Activated B cell treated with CpG ODN at 0.5 μM for 24 hours (primary cell): ENCODE measurements at regions of chr3 and their contacts with region 1.

Region 1: GRCh38 chr3:49539659-49540560 is 14.4 kb upstream of the BSN start:
- DNase-seq: peak; percentile 93
- ATAC-seq: peak; percentile 92
- H3K4me3 Mint-ChIP-seq: peak overlapping the region; percentile 79
- H3K27ac Mint-ChIP-seq: peak overlapping the region; percentile 46
- H3K4me1 Mint-ChIP-seq: peaks cover 9% of the 10 kb centered on the region
- H3K27me3 Mint-ChIP-seq: peaks cover 11% of the 10 kb centered on the region
- CTCF ChIP-seq: no peak

Region 2: DNA sequence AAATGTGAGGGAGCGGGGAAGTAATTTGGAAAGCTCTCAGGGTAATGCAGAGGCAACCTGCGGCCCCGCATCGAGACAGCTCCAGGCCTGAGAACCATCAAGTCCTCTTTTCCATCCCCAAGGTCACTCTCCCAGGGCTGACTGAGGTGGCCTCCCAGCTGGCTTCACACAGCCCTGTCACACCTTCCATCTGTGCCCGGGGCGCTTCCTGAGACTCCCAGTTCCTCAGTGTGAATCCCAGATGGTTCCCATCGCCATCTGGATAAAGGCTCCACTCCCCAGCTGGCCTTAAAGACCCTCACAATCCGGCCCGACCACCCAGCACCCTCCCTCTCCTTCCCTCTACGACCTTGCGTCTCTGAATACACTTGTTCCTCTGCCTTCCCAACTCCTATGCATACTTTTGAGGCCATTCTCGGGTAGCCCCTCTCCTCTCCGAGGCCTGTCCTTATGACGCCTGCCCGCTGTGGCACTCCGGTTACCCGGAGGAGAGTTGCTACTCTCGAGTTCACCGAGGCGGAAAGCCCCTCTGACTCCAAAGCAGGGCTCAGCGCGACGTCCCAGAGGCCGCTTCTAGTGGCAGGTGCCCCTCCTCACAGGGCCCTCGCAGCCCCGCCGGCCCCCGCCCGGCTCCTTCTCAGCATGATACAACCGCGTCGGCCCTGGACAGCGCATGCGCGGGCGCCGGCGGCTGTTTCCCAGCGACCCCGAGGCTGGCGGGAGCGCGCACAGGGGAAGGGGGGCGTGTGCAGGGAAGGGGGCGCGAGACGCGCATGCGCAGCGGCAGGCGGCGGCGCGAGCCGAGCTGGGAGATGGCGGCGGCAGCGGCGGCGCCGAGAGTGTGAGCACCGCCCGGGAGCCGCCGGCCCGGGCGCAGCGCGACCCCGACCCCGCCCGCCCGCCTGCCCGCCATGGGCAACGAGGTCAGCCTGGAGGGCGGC is 14.1 kb after region 1 on chr3 and contains the start of gene BSN:
- CTCF ChIA-PET with region 1: interaction called, 21 read pairs
- POLR2A ChIA-PET with region 1: interaction called, 7 read pairs
- intact Hi-C with region 1: loop called (anchors 1 kb)
- DNase-seq: peak; percentile 82
- ATAC-seq: peak; percentile 89
- H3K4me3 Mint-ChIP-seq: peak within 1 kb of the TSS; percentile 80
- H3K27ac Mint-ChIP-seq: no peak within 1 kb of the TSS
- H3K4me1 Mint-ChIP-seq: peaks cover 12% of the 10 kb centered on the region
- H3K27me3 Mint-ChIP-seq: peaks cover 44% of the 10 kb centered on the region
- CTCF ChIP-seq: no peak
- total RNA-seq, gene BSN: 0.15 and 0.69 TPM in 2 replicates

Region 3: DNA sequence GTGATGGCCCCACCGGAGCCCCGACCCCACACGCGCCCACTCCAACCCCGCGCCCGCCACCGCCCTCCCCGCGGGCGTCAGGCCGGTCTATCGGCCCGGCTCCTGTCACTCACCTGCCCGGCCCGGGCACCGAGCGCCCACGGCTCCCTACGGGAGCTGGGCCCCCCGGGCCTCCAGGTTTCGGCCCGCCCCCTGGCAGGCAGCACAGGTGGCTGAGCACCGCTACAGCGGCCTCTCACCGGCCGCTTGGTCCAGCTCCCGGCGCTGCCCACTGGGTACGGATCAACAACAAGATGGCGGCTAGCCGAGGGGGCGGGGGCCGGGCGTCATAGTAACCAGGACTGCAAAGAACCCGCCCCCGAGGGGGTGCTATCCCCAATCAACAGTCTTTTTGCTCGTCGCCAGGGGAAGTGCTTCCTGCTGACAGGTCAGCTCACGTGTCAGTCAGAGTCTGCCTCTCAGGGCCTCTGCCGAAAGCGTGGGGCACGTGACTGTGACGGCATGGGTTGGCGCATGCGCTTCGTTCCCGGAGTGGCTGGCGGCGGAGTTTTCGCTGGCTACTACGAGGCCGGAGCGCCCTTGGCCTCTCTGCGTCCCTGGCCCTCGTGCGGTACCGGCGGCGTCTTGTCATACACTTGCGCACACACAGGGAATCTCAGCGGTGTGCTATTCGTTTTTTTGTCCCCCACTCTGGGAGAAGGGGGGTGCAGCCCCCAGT is 246.5 kb after region 1 on chr3 and contains the start of gene IP6K1:
- CTCF ChIA-PET with region 1: no interaction called
- POLR2A ChIA-PET with region 1: no interaction called
- intact Hi-C with region 1: loop called (anchors 1 kb)
- DNase-seq: peak; percentile 97
- ATAC-seq: peak; percentile 99
- H3K4me3 Mint-ChIP-seq: peak within 1 kb of the TSS; percentile 91
- H3K27ac Mint-ChIP-seq: peak within 1 kb of the TSS; percentile 93
- H3K4me1 Mint-ChIP-seq: peaks cover 32% of the 10 kb centered on the region
- H3K27me3 Mint-ChIP-seq: no peaks in the 10 kb centered on the region
- CTCF ChIP-seq: no peak
- total RNA-seq, gene IP6K1: 44.3 and 47.6 TPM in 2 replicates

Region 4: DNA sequence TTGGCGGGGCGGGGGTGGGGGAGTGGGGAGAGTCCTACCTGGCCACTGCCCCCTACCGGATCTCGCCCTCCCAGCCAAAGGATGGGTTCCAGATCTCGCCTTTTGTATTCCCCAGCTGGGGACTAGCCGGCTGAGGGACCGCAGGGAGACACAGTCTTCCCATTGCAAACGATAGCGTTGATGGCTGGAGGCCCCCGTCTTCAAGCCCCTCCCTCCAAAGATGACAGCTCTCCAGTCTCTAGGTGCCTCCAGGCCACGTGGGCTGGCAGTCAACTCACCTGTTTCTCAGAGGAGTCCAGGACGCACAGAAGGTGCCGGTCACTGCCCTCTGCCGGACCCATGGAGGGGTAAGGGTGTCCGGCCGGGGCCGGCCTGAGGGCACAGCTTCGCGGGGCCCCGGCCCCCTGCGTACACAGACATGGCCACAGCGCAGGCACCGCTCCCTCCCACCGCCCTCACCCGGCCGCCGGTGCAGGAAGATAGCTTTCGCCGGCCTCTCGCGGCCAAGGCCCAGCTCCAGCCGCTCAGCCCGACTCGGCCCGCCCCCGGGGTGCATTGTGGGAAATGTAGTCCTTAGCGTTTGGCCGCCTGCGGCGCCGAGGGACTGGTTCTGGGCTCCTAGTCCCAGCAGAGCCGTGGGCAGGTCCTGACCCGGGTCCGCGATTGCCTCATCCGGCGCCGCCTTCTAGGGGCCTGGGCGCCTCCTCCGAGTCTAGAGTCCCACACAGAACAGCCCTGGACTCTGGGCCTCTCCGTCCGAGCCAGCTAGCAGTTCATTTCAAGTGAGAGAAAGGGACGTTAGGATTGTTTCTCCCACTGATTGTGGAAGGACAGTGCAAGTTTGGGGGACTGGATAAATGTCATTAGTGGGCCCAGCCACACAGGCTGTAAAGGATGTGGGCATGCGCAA is 389.7 kb after region 1 on chr3 and contains the start of gene MON1A:
- CTCF ChIA-PET with region 1: interaction called, 4 read pairs
- POLR2A ChIA-PET with region 1: no interaction called
- intact Hi-C with region 1: loop called (anchors 1 kb)
- DNase-seq: peak; percentile 92
- ATAC-seq: peak; percentile 95
- H3K4me3 Mint-ChIP-seq: peak within 1 kb of the TSS; percentile 86
- H3K27ac Mint-ChIP-seq: peak within 1 kb of the TSS; percentile 79
- H3K4me1 Mint-ChIP-seq: peaks cover 16% of the 10 kb centered on the region
- H3K27me3 Mint-ChIP-seq: no peaks in the 10 kb centered on the region
- CTCF ChIP-seq: no peak
- total RNA-seq, gene MON1A: 6.3 and 7.1 TPM in 2 replicates